ENCODE measurements at regions of chr1 and their contacts with region 1.

Region 1: GRCh38 chr1:32907439-32907838 is 6.2 kb upstream of the TMEM54 start:
- DNase-seq: no peak
- H3K4me3 ChIP-seq: no peak overlapping the region
- H3K27ac ChIP-seq: no peak overlapping the region
- H3K4me1 ChIP-seq: no peaks in the 10 kb centered on the region
- H3K27me3 ChIP-seq: no peaks in the 10 kb centered on the region
- CTCF ChIP-seq: no peak
- POLR2A ChIP-seq: no peak

Region 2: DNA sequence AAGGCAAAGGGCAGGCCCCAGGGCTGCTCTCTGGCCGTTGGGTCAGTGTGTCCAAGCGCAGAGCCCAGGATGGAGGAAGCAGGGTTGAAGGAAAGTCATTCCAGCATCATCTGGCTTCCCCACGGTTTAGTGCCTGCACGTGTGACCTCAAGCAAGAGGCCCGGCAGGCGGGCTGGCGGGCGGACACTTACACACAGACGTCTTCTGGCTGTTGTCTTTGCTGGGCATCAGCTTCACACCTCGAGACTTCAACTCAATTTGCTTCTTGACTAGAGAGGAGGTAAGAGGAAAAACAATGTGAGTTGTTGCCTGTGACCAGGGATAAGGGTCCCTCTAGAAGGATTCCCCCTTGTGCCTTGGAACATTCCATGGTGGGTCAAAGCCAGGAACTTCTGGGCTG is 918.1 kb after region 1 on chr1:
- intact Hi-C with region 1: loop called (anchors 5 kb)
- DNase-seq: peak; percentile 56 to 87
- H3K4me3 ChIP-seq: no peak overlapping the region
- H3K27ac ChIP-seq: no peak overlapping the region
- H3K4me1 ChIP-seq: no peaks in the 10 kb centered on the region
- H3K27me3 ChIP-seq: no peaks in the 10 kb centered on the region
- CTCF ChIP-seq: no peak
- POLR2A ChIP-seq: no peak